ENCODE measurements at regions of chrX and their contacts with region 1.

Region 1: DNA sequence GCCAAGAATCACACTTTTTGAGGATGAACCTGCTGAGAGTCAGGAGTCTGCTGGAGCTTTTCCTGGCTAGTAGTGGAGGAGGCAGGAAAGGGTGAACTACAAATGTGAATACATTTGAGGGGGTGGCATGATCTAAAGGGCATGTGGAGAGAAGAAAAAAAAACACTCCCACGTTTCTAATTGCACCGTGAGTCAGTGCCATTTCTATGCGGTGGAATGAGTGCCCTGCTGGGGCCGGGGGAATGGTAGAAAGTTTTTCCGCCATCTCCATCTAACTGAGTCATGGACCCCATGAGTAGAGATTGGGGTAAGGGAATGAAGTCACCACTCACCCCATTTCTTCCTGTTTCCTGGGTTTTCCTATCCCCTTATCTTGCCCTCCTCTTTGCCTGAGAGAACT is 19.8 kb downstream of the BEX3 start:
- DNase-seq: no peak
- ATAC-seq: no peak
- H3K4me3 ChIP-seq: no peak overlapping the region
- H3K27ac ChIP-seq: no peak overlapping the region
- H3K4me1 ChIP-seq: no peaks in the 10 kb centered on the region; the same call in 1 of the 2 replicates
- H3K27me3 ChIP-seq: no peaks in the 10 kb centered on the region
- CTCF ChIP-seq: no peak

Region 2: DNA sequence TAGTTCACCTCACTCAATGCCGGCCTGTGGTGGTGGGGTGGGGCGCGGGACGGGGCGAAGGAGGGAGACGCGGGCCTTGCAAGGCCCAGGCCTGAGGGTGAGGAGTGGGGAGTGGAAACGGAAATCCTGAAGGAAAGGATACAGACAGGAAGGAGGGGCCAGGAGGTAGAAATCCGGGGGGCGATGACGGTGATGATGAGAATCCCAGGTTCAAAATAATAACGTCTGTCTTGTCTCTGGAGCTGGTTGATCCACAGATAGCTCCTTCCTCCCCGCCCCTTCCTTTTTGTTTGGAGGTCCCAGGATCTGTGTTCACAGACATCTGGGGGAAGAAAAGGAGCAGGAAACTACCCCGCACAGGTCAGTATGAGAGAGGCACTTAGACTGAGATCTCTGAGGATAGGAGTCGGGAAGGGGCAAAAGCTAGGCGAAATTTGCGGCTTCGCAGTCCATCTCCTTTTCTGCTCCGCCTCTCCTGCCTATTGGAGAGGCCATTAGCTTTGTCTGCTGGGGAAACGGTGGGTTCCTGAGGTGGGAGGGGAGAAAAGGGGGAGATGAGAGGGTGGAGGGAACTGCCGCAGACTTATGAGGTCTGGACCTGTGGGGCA is 65.4 kb before region 1 on chrX:
- CTCF ChIA-PET with region 1: no interaction called
- POLR2A ChIA-PET with region 1: no interaction called
- in situ Hi-C with region 1: no loop called
- intact Hi-C with region 1: no loop called
- DNase-seq: no peak
- ATAC-seq: no peak
- H3K4me3 ChIP-seq: peak overlapping the region in 1 of 2 experiments; percentile 7; a peak in 1 of 4 replicates
- H3K27ac ChIP-seq: no peak overlapping the region
- H3K4me1 ChIP-seq: no peaks in the 10 kb centered on the region; the same call in 1 of the 2 replicates
- H3K27me3 ChIP-seq: 0 out of 2 replicates have a peak, but pooled peaks cover 3% of the 10 kb centered on the region
- CTCF ChIP-seq: no peak

Region 3: DNA sequence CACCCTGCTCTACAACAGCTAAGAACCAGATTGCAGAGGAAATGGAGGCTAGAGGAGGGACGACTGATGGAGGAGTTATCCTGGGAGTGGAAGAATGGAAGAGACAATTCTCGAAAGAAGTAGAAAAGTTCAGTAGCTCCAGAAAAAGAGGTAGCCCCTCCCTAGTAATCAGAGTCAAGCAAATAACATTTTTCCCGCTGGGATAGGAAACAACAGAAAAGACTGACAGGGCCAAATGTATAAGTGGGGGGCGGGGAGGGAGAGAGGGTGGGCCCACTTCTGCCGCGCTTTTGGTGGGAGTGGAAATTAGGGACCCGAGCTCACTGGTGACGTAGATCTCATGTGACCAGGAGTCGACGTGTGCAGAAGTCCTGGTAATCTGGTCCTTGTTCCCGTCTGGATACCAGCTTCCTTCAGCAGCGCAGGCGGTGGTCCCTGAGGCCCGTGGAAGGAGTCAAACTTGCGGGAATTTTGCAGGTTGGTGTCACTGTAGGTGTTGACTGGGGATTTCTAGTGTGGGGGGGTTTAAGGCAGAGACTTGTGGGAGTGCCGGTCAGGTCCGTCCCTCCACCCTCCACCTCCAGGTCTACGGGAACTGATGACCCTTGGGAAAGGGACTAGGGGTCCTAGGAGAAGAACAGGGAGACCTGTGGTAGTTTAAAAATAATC is 39.9 kb before region 1 on chrX and contains the start of gene TCEAL9:
- CTCF ChIA-PET with region 1: no interaction called
- POLR2A ChIA-PET with region 1: interaction called, 10 read pairs
- in situ Hi-C with region 1: no loop called
- intact Hi-C with region 1: no loop called
- DNase-seq: no peak
- ATAC-seq: peak; percentile 95
- H3K4me3 ChIP-seq: peak within 1 kb of the TSS; percentile 74 to 78
- H3K27ac ChIP-seq: peak within 1 kb of the TSS; percentile 86
- H3K4me1 ChIP-seq: peaks cover 2% of the 10 kb centered on the region; the same call in 1 of the 2 replicates
- H3K27me3 ChIP-seq: no peaks in the 10 kb centered on the region
- CTCF ChIP-seq: no peak
- total RNA-seq, gene TCEAL9: 42.6 TPM

Region 4: GRCh38 chrX:103742339-103742738 is 346.2 kb after region 1 on chrX:
- CTCF ChIA-PET with region 1: no interaction called
- POLR2A ChIA-PET with region 1: no interaction called
- in situ Hi-C with region 1: no loop called
- intact Hi-C with region 1: no loop called
- DNase-seq: no peak
- ATAC-seq: no peak
- H3K4me3 ChIP-seq: no peak overlapping the region
- H3K27ac ChIP-seq: no peak overlapping the region
- H3K4me1 ChIP-seq: no peaks in the 10 kb centered on the region
- H3K27me3 ChIP-seq: no peaks in the 10 kb centered on the region
- CTCF ChIP-seq: no peak

Measured in Panc1 (cell line).